Activated CD4-positive, alpha-beta memory T cell treated with anti-CD3 and anti-CD28 coated beads for 36 hours (primary cell): ENCODE measurements at regions of chr11 and their contacts with region 1.

Region 1: GRCh38 chr11:6234387-6235107 is at the start of gene FHIP1B:
- DNase-seq: peak; percentile 100
- H3K4me3 Mint-ChIP-seq: peak within 1 kb of the TSS; percentile 97
- H3K27ac Mint-ChIP-seq: peak within 1 kb of the TSS; percentile 91
- H3K4me1 Mint-ChIP-seq: peaks cover 38% of the 10 kb centered on the region
- H3K27me3 Mint-ChIP-seq: no peaks in the 10 kb centered on the region
- total RNA-seq, gene FHIP1B: 15.3 to 15.8 TPM

Region 2: GRCh38 chr11:6251120-6251733 is 16.7 kb after region 1 on chr11:
- CTCF ChIA-PET with region 1: interaction called, 35 read pairs
- POLR2A ChIA-PET with region 1: no interaction called
- intact Hi-C with region 1: no loop called
- DNase-seq: peak; percentile 74
- H3K4me3 Mint-ChIP-seq: no peak overlapping the region
- H3K27ac Mint-ChIP-seq: no peak overlapping the region
- H3K4me1 Mint-ChIP-seq: no peaks in the 10 kb centered on the region
- H3K27me3 Mint-ChIP-seq: no peaks in the 10 kb centered on the region

Region 3: GRCh38 chr11:6353367-6353987 is 118.9 kb after region 1 on chr11:
- CTCF ChIA-PET with region 1: interaction called, 4 read pairs
- POLR2A ChIA-PET with region 1: no interaction called
- intact Hi-C with region 1: loop called (anchors 2 kb)
- DNase-seq: peak; percentile 72
- H3K4me3 Mint-ChIP-seq: no peak overlapping the region
- H3K27ac Mint-ChIP-seq: no peak overlapping the region
- H3K4me1 Mint-ChIP-seq: peaks cover 44% of the 10 kb centered on the region
- H3K27me3 Mint-ChIP-seq: no peaks in the 10 kb centered on the region

Region 4: DNA sequence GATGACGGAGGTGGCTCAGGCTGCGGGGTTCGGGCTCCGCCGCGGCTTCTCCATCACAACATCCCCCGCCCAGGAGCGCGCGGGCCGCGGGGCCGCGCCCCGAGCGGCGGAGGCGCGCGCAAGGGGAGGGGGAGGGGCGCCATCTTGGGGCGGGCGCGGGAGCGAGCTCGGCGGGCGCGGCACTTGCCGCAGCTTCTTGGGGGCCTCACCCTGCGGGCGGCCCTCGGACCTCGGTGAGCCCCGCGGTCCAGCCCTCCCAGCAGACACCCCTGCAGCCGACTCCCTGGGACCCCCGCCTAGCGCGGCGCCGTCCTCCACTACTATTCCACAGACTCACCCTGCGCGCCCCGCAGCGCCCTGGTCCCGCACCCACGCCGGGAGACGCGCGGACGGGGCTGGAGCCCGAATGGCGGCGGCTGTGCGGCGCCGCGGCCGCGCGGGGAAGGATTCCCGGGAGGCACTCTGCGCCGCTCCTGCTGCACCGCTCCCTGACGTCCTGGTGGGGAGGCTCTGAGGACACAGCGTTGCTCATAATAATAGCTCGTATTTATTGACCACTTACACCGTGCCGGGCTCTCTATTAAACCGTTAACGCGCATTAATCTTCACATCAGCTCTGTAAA is 184.6 kb after region 1 on chr11 and contains the start of gene APBB1:
- CTCF ChIA-PET with region 1: no interaction called
- POLR2A ChIA-PET with region 1: no interaction called
- intact Hi-C with region 1: loop called (anchors 2 kb)
- DNase-seq: peak; percentile 78
- H3K4me3 Mint-ChIP-seq: peak within 1 kb of the TSS; percentile 73
- H3K27ac Mint-ChIP-seq: peak within 1 kb of the TSS; percentile 61
- H3K4me1 Mint-ChIP-seq: peaks cover 8% of the 10 kb centered on the region
- H3K27me3 Mint-ChIP-seq: peaks cover 5% of the 10 kb centered on the region
- total RNA-seq, gene APBB1: 51.6 to 55.3 TPM

Region 5: GRCh38 chr11:6682936-6683861 is 448.7 kb after region 1 on chr11 and contains the start of gene MRPL17:
- CTCF ChIA-PET with region 1: no interaction called
- POLR2A ChIA-PET with region 1: no interaction called
- intact Hi-C with region 1: loop called (anchors 1 kb)
- DNase-seq: peak; percentile 100
- H3K4me3 Mint-ChIP-seq: peak within 1 kb of the TSS; percentile 99
- H3K27ac Mint-ChIP-seq: peak within 1 kb of the TSS; percentile 95
- H3K4me1 Mint-ChIP-seq: peaks cover 36% of the 10 kb centered on the region
- H3K27me3 Mint-ChIP-seq: no peaks in the 10 kb centered on the region
- total RNA-seq, gene MRPL17: 98.5 to 102 TPM